Activated CD8-positive, alpha-beta memory T cell treated with anti-CD3 and anti-CD28 coated beads, Interleukin-2, amount 10 ng/mL, durations not matched to agents 7 days and 5 days (primary cell): ENCODE measurements at regions of chr1 and their contacts with region 1.

Region 1: DNA sequence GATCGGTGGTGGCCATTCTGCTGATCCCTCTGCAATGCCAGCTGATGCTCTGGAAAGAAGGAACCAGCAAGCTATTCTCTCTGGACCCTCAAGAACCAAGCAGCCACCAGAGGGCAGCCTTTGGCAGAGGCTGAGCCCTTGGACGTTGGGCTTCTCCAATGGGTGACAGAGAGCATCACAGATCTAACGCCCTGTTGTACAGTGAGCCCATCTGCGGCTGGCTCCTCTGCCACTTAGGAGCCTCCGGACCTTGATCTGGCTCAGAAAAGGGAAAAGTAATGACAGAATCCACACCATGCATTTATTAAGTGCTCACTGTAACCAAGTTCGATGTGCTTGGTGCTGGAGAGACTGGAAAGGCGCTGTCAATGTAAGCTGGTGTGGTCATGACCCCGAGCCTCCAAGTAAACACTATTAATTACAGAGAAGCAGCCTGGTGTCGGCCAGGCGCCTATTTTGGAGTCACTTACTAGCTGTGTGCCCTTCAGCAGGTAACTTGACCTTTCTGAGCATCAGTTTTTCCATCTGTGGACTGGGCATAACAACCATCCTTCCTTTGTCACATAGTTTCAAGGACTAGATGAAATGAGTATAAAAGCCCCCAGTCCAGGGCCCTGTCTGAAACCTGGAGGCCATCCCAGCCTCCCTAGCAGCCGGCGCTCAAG is 34.9 kb downstream of the ECE1 start:
- DNase-seq: peak; percentile 87
- ATAC-seq: peak; percentile 79
- H3K4me3 Mint-ChIP-seq: no peak overlapping the region
- H3K27ac Mint-ChIP-seq: no peak overlapping the region
- H3K4me1 Mint-ChIP-seq: peaks cover 27% of the 10 kb centered on the region
- H3K27me3 Mint-ChIP-seq: no peaks in the 10 kb centered on the region

Region 2: DNA sequence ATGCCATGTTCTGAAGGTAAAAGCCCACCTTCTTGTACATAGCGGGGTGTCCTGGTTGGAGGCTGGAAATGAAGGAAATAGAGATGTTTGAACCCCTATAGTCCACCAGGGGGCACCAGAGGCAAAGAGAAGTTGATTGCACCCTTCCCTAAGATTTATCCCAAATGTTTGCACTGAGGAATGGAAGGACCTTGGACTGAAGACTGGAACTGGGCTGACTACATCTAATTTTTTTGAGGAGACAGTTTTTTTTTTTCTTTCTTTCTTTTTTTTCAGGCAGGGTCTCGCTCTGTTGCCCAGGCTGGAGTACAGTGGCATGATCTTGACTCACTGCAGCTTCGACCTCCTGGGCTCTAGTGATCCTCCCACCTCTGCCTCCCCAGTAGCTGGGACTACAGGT is 23.4 kb before region 1 on chr1:
- CTCF ChIA-PET with region 1: interaction called, 24 read pairs
- DNase-seq: no peak
- ATAC-seq: peak; percentile 69
- H3K4me3 Mint-ChIP-seq: no peak overlapping the region
- H3K27ac Mint-ChIP-seq: no peak overlapping the region
- H3K4me1 Mint-ChIP-seq: no peaks in the 10 kb centered on the region
- H3K27me3 Mint-ChIP-seq: no peaks in the 10 kb centered on the region

Region 3: GRCh38 chr1:21270086-21270689 is 14.8 kb after region 1 on chr1:
- CTCF ChIA-PET with region 1: interaction called, 110 read pairs
- DNase-seq: peak; percentile 85
- ATAC-seq: peak; percentile 82
- H3K4me3 Mint-ChIP-seq: no peak overlapping the region
- H3K27ac Mint-ChIP-seq: no peak overlapping the region
- H3K4me1 Mint-ChIP-seq: peaks cover 4% of the 10 kb centered on the region
- H3K27me3 Mint-ChIP-seq: no peaks in the 10 kb centered on the region

Region 4: GRCh38 chr1:21308847-21309652 is 53.6 kb after region 1 on chr1:
- CTCF ChIA-PET with region 1: no interaction called
- DNase-seq: no peak
- ATAC-seq: no peak
- H3K4me3 Mint-ChIP-seq: no peak overlapping the region
- H3K27ac Mint-ChIP-seq: no peak overlapping the region
- H3K4me1 Mint-ChIP-seq: peaks cover 34% of the 10 kb centered on the region
- H3K27me3 Mint-ChIP-seq: no peaks in the 10 kb centered on the region

Region 5: DNA sequence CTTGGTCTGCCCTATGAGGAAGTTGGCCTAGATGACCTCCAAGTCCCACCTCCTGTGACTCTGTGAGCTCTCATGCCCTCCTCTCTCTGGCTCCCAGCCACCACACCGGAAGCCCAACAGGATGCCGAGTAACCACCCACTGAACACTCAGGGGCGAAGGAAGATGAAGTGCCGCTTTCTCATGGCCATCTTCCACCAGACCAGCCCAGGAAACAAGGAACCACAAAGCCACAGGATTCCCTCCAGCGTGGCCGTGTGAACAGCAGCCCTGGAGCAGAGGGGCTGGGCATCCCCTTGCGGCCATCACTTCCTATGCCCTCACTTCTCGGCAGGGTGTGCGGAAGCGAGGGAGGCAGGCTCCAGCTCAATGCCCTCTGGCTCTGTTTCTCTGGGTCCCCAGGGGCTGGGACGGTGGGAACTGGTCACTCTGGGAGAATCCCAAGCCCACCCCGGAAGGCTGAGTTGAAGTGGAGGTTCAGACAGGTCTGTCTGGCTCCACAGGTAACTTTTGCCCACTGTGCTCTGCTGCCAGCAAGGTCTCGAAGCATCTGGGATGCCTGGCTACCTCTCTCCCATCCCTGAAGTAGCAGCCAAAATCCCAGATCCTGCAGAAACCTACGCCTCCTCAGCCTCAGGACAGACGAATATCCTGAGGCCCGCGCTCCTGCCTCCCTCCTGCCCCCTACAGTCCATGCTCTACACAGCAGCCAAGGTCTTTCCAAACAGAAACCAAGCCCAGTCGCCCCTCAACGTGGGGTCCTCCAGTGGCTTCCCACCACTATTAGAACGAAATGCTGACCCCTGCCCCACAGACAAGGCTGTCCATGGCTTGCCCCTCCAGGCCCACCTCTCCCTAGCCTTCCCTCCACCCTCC is 79.0 kb after region 1 on chr1:
- CTCF ChIA-PET with region 1: interaction called, 23 read pairs
- DNase-seq: peak; percentile 93
- ATAC-seq: peak; percentile 94
- H3K4me3 Mint-ChIP-seq: peak overlapping the region; percentile 70
- H3K27ac Mint-ChIP-seq: peak overlapping the region; percentile 94
- H3K4me1 Mint-ChIP-seq: peaks cover 81% of the 10 kb centered on the region
- H3K27me3 Mint-ChIP-seq: no peaks in the 10 kb centered on the region

Region 6: DNA sequence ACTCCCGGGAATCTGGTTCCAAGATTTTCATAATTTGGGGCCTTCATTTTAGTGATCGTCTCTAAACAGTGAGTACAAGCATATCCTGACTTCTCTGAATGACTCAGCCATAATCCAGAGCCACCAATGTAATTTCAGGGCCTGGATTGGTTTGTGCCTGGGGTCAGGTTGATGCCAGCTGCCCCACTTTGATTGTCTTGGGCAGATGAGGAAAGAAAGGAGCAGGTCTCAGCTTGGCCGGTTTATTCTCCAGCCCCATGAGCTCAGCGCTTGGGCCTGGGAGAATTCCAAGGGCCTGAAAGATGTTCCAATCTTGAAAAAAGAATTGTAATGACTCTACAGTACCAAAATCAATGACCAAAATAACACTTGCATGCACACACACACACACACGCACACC is 106.1 kb after region 1 on chr1:
- CTCF ChIA-PET with region 1: interaction called, 158 read pairs
- DNase-seq: no peak
- ATAC-seq: no peak
- H3K4me3 Mint-ChIP-seq: no peak overlapping the region
- H3K27ac Mint-ChIP-seq: no peak overlapping the region
- H3K4me1 Mint-ChIP-seq: peaks cover 1% of the 10 kb centered on the region
- H3K27me3 Mint-ChIP-seq: peaks cover 2% of the 10 kb centered on the region

Region 7: GRCh38 chr1:21414015-21414414 is 158.6 kb after region 1 on chr1:
- CTCF ChIA-PET with region 1: no interaction called
- DNase-seq: no peak
- ATAC-seq: no peak
- H3K4me3 Mint-ChIP-seq: no peak overlapping the region
- H3K27ac Mint-ChIP-seq: no peak overlapping the region
- H3K4me1 Mint-ChIP-seq: no peaks in the 10 kb centered on the region
- H3K27me3 Mint-ChIP-seq: peaks cover 50% of the 10 kb centered on the region